ENCODE measurements at regions of chr6 and their contacts with region 1.

Region 1: DNA sequence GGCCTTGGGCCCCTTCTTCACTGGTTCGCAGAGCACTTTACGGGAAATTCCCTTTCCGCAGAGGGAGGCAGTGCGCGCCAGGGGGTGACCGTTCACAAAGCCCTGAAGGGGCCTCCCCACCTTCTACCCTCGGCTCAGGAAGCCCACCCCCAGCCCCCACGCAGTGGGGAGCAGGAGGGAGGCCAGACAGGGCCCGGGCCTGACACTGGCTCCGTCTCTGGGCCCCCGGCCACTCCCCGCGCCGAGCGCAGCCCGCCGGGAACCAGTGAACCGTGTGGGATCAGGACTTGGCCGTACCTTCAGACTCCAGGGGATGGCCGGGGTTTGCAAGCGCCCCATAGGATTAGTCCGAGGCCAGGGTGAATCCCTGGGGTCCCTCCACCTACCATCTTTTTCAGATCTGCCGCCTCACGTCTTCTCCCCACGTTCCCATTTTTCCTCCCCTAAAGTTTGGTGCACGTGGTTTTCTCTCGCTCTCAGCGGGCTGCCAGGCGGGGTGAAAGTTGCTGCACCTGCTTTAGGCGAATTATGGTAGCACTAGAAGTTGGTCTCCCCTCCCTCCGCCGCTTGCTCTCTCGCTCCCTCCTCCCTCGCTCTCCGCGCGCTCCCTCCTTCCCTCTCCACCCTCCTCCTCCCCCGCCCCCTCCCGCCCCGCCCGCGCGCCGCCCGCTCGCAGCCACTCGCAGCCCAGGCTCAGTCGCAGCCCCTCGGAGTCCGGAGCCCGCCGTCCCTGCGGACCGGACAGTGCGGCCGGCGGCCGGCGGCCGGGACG is at the start of gene FOXP4:
- DNase-seq: peak; percentile 78 to 98 (median 88)

Region 2: DNA sequence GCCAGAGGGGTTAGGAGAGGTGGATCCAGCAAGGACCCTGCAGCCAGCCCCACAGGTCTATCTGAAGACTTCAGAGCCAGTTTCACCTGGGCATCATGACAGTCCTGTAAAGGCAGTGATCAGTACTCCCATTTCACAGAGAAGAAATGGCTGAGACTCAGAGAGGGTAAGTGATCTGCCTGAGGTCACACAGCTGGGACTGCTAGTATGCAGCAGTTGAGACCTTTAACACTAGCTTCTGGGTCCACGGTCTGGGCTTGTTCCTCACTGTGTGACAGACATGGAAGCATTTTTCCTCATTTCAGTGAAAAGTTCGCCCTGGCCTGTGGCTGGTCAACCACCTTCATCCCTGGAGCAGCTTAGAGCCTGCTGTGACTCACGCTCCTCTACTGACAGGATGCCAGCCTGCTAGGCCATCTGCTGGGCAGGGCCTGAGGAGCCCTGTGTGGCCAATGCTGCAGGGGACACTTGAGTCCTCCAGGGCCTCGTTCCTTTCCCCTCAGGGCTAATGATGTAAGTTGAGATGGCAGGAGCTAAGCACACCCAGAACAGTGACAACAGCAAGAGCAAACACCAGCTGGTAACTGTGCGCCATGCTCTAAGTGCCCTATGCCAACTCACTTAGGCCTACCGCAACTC is 1150.7 kb before region 1 on chr6:
- intact Hi-C with region 1: no loop called
- DNase-seq: peak in 1 of 10 donors; percentile 67

Region 3: DNA sequence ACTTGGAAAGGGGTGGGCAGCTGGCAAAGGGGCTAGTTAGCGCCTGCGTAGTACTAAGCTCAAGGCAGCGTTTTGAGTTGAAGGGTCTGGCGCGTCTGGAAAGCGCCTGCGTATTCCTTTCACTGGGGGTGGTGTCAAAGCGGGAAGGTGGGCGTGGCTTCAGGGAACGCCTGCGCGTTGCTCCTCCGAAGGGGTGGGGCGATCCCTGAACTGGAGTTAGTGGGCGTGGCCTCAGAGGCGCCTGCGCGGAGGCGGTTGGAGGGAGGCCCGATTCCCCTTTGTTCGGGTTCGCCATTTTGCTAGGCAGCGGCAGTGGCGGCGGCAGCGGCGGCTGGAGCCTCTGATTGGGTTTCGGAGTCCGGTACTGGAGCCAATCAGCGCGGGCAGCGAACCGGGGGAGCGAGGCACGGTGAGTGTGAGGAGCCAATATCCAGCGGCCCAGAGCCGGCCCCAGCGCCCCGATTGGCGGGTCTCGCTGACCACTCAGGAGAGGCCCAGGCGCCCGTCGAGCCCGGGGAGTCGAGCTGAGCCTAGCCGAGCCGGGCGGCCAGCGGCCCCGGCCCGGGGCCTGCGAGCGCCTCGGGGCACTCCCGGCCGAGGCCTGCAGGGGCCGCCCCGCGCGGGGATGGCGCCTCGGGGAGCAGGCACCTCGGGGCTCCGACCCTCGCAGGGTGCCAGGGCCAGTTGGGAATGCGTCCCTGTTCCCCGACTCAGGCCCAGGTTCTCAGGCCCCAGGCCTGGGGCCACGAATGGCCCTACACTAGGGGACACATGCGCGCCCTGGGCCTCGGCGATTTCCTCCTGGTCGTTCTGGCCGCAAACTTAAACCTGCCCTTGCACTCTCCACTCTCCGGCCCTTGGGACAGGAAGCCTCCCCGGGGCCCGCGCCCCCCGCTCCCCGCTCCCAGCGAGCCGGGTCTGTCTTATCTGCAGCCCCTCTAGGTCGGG is 472.9 kb before region 1 on chr6 and contains the start of gene NFYA:
- intact Hi-C with region 1: loop called (anchors 5 kb)
- DNase-seq: peak; percentile 98 to 100 (median 99)

Region 4: GRCh38 chr6:41494212-41495110 is 51.4 kb before region 1 on chr6:
- intact Hi-C with region 1: no loop called
- DNase-seq: peak in 1 of 10 donors; percentile 24